HCT116 (cell line): ENCODE measurements at regions of chr6 and their contacts with region 1.

Region 1: DNA sequence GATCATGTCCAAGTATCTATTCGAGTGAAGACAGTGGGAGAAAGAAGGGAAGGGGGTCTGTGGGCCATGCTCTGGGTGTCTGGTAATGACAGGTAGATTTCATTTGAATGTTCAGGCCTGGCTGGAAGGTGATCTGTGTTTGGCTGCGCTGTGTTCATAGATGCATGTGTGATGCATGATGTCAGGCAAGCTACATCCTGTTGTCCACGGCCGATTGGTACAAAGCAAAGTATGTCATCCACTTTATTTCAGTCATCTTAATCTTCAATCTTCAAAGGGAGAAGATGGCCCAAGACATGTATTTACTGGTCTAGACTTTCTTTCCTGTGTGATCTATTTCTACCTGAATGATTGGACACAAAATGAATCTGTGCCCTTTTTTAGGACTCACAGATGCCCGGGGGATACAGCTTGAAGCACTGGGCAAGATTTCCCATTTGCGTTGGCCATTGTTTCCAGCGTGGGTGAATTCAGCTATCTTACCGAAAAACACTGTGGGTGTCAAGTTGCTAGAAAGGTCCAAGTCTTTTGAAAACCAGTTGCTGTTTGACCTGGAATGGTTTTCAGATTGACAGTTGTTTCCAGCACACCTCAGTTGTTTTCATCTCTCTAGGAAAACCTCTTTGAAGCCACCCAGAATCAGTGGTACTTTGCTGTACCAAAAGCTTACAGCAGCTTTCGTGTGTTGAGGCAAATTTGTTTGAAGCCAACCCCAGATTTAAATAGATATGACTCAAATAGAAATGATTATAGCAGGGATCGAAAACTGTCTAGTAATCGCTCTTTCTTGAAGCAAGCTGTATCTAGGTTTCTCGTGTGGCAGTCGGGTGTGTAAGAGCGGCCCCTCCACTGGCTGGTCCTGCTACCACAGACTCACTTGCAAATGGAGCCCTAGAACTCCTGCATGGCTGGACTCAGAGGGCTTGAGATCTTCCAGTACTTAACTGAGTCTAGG is 27.2 kb downstream of the DUSP22 start:
- DNase-seq: no peak
- ATAC-seq: no peak
- H3K4me3 ChIP-seq: no peak overlapping the region
- H3K27ac ChIP-seq: no peak overlapping the region
- H3K4me1 ChIP-seq: no peaks in the 10 kb centered on the region
- H3K27me3 ChIP-seq: no peaks in the 10 kb centered on the region
- CTCF ChIP-seq: no peak
- POLR2A ChIP-seq: no peak
- RAD21 ChIP-seq: no peak

Region 2: GRCh38 chr6:379367-380181 is 60.1 kb after region 1 on chr6:
- CTCF ChIA-PET with region 1: no interaction called
- POLR2A ChIA-PET with region 1: no interaction called
- RAD21 ChIA-PET with region 1: no interaction called
- intact Hi-C with region 1: loop called (anchors 2 kb)
- DNase-seq: no peak
- ATAC-seq: no peak
- H3K4me3 ChIP-seq: no peak overlapping the region
- H3K27ac ChIP-seq: no peak overlapping the region
- H3K4me1 ChIP-seq: no peaks in the 10 kb centered on the region
- H3K27me3 ChIP-seq: no peaks in the 10 kb centered on the region
- CTCF ChIP-seq: no peak
- POLR2A ChIP-seq: no peak
- RAD21 ChIP-seq: no peak